ENCODE measurements at regions of chr5 and their contacts with region 1.

Region 1: GRCh38 chr5:137735555-137736284 is at the start of gene KLHL3:
- DNase-seq: peak; percentile 27
- H3K4me3 Mint-ChIP-seq: no peak within 1 kb of the TSS
- H3K27ac Mint-ChIP-seq: no peak within 1 kb of the TSS
- H3K4me1 Mint-ChIP-seq: peaks cover 11% of the 10 kb centered on the region
- H3K27me3 Mint-ChIP-seq: peaks cover 3% of the 10 kb centered on the region
- total RNA-seq, gene KLHL3: 1.7 and 2.3 TPM in 2 replicates

Region 2: DNA sequence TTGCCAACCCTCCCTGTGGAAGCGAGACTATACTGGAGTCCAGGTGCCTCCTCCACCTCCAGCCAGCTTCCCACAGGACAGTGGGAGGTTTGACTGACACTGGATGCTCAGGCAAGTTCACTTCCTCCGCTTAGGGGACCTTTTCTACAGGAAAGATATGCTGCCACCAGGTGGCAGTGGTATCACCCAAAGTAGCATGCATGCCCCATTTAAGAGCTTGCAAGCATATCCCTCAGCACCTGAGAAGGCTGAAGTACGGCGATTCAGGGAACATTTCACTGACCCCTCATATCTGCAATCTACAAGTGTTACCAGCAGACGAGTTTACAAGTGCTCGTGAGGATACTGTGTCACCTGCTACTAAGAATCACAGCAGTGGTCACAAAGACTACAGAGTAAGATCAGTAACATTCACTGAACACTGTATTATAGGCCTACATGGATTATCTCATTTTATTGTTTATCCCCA is 75.3 kb before region 1 on chr5:
- intact Hi-C with region 1: loop called (anchors 1 kb)
- DNase-seq: peak; percentile 52
- H3K4me3 Mint-ChIP-seq: no peak overlapping the region
- H3K27ac Mint-ChIP-seq: no peak overlapping the region
- H3K4me1 Mint-ChIP-seq: peaks cover 7% of the 10 kb centered on the region
- H3K27me3 Mint-ChIP-seq: no peaks in the 10 kb centered on the region

Region 3: GRCh38 chr5:137665678-137666460 is 69.9 kb before region 1 on chr5:
- intact Hi-C with region 1: loop called (anchors 1 kb)
- DNase-seq: peak; percentile 24
- H3K4me3 Mint-ChIP-seq: no peak overlapping the region
- H3K27ac Mint-ChIP-seq: peak overlapping the region; percentile 79
- H3K4me1 Mint-ChIP-seq: peaks cover 27% of the 10 kb centered on the region
- H3K27me3 Mint-ChIP-seq: no peaks in the 10 kb centered on the region

Region 4: DNA sequence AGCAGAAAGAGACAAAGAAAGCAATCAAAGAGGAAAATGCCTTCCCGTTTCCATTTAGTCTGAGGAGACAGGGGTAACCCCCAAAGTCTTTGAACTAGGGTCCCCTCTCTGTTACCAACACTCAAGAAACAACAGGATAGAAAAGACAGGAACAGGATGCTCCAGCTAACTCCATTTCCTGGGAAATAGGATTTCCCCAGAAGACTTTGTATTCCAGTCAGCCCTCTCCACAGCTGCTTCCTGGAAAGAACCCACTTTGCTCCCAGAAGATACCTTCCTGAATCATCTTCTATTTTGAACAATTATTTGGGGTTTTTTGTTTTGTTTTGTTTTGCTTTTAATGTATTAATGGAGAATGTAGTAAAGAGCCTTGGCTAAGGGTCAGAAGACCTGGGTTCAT is 55.8 kb before region 1 on chr5:
- intact Hi-C with region 1: no loop called
- DNase-seq: no peak
- H3K4me3 Mint-ChIP-seq: no peak overlapping the region
- H3K27ac Mint-ChIP-seq: no peak overlapping the region
- H3K4me1 Mint-ChIP-seq: no peaks in the 10 kb centered on the region
- H3K27me3 Mint-ChIP-seq: no peaks in the 10 kb centered on the region

Region 5: GRCh38 chr5:137695651-137696428 is 39.9 kb before region 1 on chr5:
- intact Hi-C with region 1: loop called (anchors 2 kb)
- DNase-seq: peak; percentile 12
- H3K4me3 Mint-ChIP-seq: no peak overlapping the region
- H3K27ac Mint-ChIP-seq: peak overlapping the region; percentile 75
- H3K4me1 Mint-ChIP-seq: peaks cover 21% of the 10 kb centered on the region
- H3K27me3 Mint-ChIP-seq: no peaks in the 10 kb centered on the region

Region 6: GRCh38 chr5:137754126-137754960 is 18.6 kb after region 1 on chr5 and contains the start of gene HNRNPA0:
- intact Hi-C with region 1: loop called (anchors 1 kb)
- DNase-seq: peak; percentile 96
- H3K4me3 Mint-ChIP-seq: peak within 1 kb of the TSS; percentile 99
- H3K27ac Mint-ChIP-seq: peak within 1 kb of the TSS; percentile 100
- H3K4me1 Mint-ChIP-seq: peaks cover 21% of the 10 kb centered on the region
- H3K27me3 Mint-ChIP-seq: no peaks in the 10 kb centered on the region
- total RNA-seq, gene HNRNPA0: 37.2 and 37.5 TPM in 2 replicates